ENCODE measurements at regions of chr2 and their contacts with region 1.

Region 1: GRCh38 chr2:167212014-167212648 is 323.9 kb downstream of the XIRP2 start:
- DNase-seq: no peak
- H3K4me3 ChIP-seq: no peak overlapping the region
- H3K27ac ChIP-seq: no peak overlapping the region
- H3K4me1 ChIP-seq: peaks cover 0 to 5% (median 0%) of the 10 kb centered on the region in 4 donors
- H3K27me3 ChIP-seq: no peaks in the 10 kb centered on the region
- CTCF ChIP-seq: peak; percentile 24 to 76 (median 64)
- EP300 ChIP-seq: no peak
- POLR2A ChIP-seq: no peak

Region 2: GRCh38 chr2:166539340-166540162 is 672.6 kb before region 1 on chr2:
- intact Hi-C with region 1: loop called (anchors 5 kb)
- DNase-seq: no peak
- H3K4me3 ChIP-seq: peak overlapping the region in 2 of 4 donors; percentile 11 to 20
- H3K27ac ChIP-seq: no peak overlapping the region
- H3K4me1 ChIP-seq: peaks cover 0 to 10% (median 4%) of the 10 kb centered on the region in 4 donors
- H3K27me3 ChIP-seq: no peaks in the 10 kb centered on the region
- CTCF ChIP-seq: peak; percentile 64 to 76 (median 70)
- EP300 ChIP-seq: no peak
- POLR2A ChIP-seq: no peak

Region 3: DNA sequence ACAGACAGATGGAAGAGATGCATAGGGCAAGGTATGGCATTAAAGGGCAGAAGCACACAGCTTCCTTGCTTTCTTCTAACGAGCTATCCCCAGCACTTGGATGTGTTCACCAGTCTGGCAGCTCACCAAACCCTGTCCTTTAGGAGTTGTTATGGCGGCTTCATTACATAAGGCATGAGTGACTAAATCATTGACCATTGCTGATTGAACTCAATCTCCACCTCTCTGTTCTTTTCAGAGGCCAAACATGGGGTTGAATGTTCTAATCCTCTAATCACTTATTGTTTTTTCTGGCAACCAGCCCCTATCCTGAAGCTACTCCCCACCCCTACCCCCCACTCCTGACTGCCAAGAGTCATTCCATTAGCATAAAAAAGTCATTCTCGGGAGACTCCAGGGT is 22.1 kb before region 1 on chr2:
- intact Hi-C with region 1: no loop called
- DNase-seq: no peak
- H3K4me3 ChIP-seq: no peak overlapping the region
- H3K27ac ChIP-seq: no peak overlapping the region
- H3K4me1 ChIP-seq: peaks cover 0 to 44% (median 37%) of the 10 kb centered on the region in 4 donors
- H3K27me3 ChIP-seq: no peaks in the 10 kb centered on the region
- CTCF ChIP-seq: no peak
- EP300 ChIP-seq: no peak
- POLR2A ChIP-seq: no peak